Posterior vena cava (tissue), 2 donors: ENCODE measurements at regions of chr6 and their contacts with region 1.

Region 1: GRCh38 chr6:130313206-130313605 is 52.6 kb upstream of the TMEM200A start:
- DNase-seq: no peak

Region 2: DNA sequence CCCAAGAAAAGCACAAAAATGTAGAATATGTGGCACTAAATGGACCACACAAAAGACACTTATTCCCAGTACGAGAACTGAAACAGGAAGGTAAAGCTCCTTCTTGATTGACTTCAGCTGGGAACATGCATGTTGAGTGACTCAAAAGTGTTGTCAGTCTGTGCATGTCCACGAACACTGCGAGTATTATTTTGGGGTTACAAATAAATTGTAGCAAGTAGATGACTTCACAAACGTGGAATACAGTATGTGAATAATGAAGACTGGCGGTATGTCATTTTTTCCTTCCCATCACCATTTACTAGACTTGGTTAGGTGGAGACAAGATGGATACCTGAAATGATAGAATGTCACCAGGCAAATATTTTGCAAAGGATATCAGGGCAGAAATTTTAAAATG is 249.4 kb before region 1 on chr6:
- intact Hi-C with region 1: no loop called
- DNase-seq: no peak

Region 3: DNA sequence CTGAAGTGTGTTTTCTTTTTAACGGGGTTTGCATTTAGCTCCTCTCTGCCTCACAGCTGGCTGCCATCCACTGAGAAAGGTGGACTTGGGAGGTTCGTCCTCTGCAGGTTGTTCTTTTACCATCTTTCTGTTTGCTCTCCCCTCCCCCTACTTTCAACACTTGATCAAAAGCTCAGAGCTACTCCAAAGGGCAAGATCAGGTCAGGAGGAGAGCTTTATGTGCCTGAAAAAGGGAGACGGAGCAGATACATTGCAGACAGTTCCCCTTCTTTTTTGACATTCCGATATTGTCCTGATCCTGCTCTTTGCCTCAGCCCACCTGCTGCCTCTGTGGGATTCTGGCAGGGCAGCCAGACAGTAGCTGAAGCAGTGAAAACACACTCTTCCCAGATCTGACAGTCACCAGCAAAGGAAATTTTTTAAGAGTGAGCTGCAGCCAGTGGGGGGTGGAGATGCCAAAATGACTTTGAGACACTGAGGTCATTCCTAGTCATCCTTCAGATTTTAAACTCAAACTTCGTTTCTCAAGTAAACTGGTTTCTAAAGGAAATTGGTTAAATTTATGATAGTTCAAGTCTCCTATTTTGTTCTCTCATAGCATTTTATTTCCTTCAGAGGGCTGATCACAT is 540.5 kb after region 1 on chr6:
- intact Hi-C with region 1: loop called in 1 of 2 experiments (anchors 5 kb)
- DNase-seq: no peak

Region 4: GRCh38 chr6:131073577-131073976 is 760.4 kb after region 1 on chr6:
- intact Hi-C with region 1: no loop called
- DNase-seq: no peak